ENCODE measurements at regions of chr3 and their contacts with region 1.

Region 1: DNA sequence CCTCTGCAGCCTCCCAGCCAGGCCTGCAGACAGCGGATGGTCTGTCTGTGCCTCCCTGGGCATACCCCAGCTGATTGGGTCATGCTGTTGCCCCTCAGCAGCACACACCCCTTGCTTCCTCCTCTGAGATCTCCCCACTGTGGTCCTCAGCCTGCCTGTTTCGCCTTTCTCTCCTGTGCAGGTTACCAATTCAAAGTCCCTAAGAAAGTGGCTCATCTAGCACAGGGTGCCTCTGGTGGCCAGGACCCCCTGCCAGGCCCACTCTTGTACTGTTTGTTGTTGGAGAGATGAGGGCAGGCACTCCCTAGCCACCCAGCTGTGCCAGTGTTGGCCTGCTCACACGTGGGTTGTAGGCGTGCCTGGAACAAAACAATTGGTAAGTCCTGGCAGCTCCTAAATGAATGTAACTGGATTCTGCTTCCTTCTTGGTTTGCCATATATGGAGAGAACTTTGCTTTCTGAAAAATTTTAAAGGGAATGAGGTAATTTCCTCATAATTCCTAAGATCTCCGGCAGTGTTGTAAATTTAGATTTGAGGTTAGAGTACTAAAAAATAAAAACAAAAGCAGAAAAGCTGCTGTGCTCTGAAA is 213.2 kb upstream of the IL12A start:
- DNase-seq: peak; percentile 61
- H3K4me3 ChIP-seq: no peak overlapping the region
- H3K27me3 ChIP-seq: no peaks in the 10 kb centered on the region
- CTCF ChIP-seq: no peak

Region 2: GRCh38 chr3:159751146-159751545 is 24.3 kb before region 1 on chr3:
- CTCF ChIA-PET with region 1: no interaction called
- POLR2A ChIA-PET with region 1: interaction called, 16 read pairs
- DNase-seq: no peak
- H3K4me3 ChIP-seq: no peak overlapping the region
- H3K27me3 ChIP-seq: no peaks in the 10 kb centered on the region
- CTCF ChIP-seq: no peak

Region 3: GRCh38 chr3:159787191-159787590 is 11.7 kb after region 1 on chr3:
- CTCF ChIA-PET with region 1: interaction called, 11 read pairs
- POLR2A ChIA-PET with region 1: interaction called, 9 read pairs
- DNase-seq: peak; percentile 29
- H3K4me3 ChIP-seq: no peak overlapping the region
- H3K27me3 ChIP-seq: no peaks in the 10 kb centered on the region
- CTCF ChIP-seq: no peak